Caco-2 (cell line): ENCODE measurements at regions of chr5 and their contacts with region 1.

Region 1: DNA sequence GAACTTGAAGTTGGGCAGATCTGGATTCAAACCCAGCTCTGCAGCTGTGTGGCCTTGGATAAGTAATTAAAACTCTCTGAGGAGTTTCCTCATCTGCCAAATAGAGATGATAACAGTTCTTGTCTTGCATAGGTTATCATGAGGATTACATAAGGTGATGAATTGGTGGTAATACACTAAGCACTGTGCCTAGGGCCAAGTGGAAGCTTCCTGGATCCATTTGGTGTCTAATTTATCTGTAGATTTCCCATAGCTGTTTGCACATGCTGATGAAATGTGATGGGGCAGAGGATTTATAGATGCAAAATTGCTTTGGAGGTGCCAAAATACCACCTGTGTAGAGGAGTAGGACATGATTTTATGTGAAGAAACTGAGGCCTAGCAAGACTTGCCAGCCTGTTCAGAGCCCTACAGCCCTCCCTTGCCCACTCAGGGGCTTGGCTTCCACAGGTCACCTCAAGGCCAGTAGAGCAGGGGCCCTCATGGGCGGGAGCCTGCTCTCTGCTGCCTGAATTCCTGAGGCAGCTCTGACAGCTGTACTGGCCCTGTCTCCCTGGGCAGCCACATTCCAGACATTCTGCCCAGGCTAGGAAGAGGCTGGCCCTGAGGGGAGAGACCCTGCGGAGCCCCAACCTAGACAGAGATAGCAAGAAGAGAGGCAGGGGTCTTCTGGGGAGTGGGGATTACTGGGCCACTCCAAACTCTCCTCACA is 5.9 kb upstream of the FAT2 start:
- DNase-seq: peak; percentile 71 to 82
- H3K4me3 ChIP-seq: no peak overlapping the region
- H3K4me3 Mint-ChIP-seq: peak overlapping the region; percentile 42
- H3K27ac Mint-ChIP-seq: peak overlapping the region; percentile 66
- H3K4me1 ChIP-seq: peaks cover 37% of the 10 kb centered on the region
- H3K4me1 Mint-ChIP-seq: peaks cover 38% of the 10 kb centered on the region
- H3K27me3 ChIP-seq: no peaks in the 10 kb centered on the region
- H3K27me3 Mint-ChIP-seq: no peaks in the 10 kb centered on the region
- CTCF ChIP-seq: no peak

Region 2: DNA sequence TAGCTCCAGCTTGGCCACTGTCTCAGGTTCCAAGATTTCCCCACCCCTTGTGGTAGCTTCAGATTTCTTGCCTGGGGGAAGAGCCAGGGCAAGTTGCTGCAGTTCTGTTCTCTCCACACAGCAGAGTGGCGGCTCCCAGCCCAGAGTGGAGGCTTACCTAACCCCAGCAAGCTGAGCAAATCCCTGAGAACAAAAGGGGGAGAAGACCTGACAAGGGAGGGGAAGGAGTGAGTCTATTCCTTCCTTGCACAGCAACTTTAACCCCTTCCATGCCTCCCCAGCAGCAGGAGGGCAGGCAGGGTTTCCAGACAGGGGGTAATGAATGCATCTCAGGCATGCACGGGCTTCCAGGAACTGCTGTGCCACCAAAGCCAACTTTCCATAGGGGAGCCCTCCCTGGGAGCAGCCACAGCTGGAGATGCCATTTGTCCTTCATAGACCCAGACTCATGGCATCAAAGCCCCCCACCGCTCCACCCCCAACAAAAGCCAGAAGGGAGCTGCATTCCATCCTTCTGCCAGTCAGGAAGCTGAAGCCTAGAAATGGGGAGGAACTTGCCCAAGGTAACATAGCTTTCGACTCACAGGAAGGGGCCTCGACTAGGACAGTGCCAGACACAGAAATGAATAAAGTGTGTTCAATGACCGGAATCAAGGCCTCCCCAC is 22.9 kb after region 1 on chr5:
- CTCF ChIA-PET with region 1: no interaction called
- POLR2A ChIA-PET with region 1: interaction called, 4 read pairs
- intact Hi-C with region 1: loop called (anchors 1 kb)
- DNase-seq: peak; percentile 27 to 67
- H3K4me3 ChIP-seq: no peak overlapping the region
- H3K4me3 Mint-ChIP-seq: no peak overlapping the region
- H3K27ac Mint-ChIP-seq: no peak overlapping the region
- H3K4me1 ChIP-seq: peaks cover 47% of the 10 kb centered on the region
- H3K4me1 Mint-ChIP-seq: peaks cover 22% of the 10 kb centered on the region
- H3K27me3 ChIP-seq: no peaks in the 10 kb centered on the region
- H3K27me3 Mint-ChIP-seq: no peaks in the 10 kb centered on the region
- CTCF ChIP-seq: no peak